Activated B cell treated with CpG ODN at 0.5 μM for 24 hours (primary cell): ENCODE measurements at regions of chr11 and their contacts with region 1.

Region 1: GRCh38 chr11:64304316-64305072 is 830 bp upstream of the ESRRA start:
- DNase-seq: peak; percentile 84
- ATAC-seq: peak; percentile 13
- H3K4me3 Mint-ChIP-seq: peak overlapping the region; percentile 87
- H3K27ac Mint-ChIP-seq: peak overlapping the region; percentile 89
- H3K4me1 Mint-ChIP-seq: peaks cover 34% of the 10 kb centered on the region
- H3K27me3 Mint-ChIP-seq: peaks cover 11% of the 10 kb centered on the region
- CTCF ChIP-seq: peak; percentile 22

Region 2: DNA sequence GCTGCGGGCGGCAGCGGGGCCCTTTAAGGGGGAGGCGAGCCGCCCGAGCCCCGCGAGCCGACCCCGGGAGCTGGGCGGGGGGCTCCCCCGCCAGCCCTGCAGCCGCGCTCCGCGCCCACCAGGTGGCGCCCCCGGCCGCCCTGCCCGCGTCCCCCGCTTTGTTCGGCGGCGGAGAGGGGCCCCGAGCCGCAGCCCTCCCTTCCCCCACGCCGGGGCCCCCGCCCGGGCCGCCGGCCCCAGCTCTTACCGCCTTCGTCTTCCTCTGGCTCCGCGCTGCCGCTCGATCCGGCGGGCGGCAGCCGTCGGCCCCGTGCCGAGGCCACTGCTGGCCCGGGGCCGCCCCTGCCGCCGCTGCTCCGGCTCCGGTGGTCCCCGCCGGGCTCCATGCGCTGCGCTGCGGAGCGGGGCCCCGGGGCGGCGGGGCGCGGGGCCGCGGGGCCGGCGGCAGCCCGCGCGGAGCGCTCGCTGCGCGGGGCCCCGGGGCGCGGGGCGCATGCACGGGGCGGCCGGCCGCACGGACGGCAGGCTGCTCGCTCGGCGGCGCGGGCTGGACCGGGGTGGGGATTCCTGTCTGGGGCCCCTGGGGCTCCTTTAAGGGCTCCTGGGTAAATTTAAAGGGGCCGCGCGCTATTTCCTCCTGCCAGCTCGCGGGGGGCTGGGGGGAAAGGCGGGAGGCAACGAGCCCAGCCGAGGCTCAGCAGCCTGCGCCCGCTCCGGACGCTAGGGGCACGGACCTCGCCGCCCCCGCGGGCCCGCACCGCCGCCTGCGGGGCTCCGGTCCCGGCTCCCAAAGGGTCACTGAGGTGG is 536.1 kb before region 1 on chr11 and contains the start of gene ZFTA:
- CTCF ChIA-PET with region 1: no interaction called
- POLR2A ChIA-PET with region 1: no interaction called
- intact Hi-C with region 1: loop called (anchors 5 kb)
- DNase-seq: peak; percentile 80
- ATAC-seq: peak; percentile 68
- H3K4me3 Mint-ChIP-seq: peak within 1 kb of the TSS; percentile 94
- H3K27ac Mint-ChIP-seq: peak within 1 kb of the TSS; percentile 83
- H3K4me1 Mint-ChIP-seq: peaks cover 11% of the 10 kb centered on the region
- H3K27me3 Mint-ChIP-seq: peaks cover 4% of the 10 kb centered on the region
- CTCF ChIP-seq: no peak
- total RNA-seq, gene ZFTA: 11.2 and 12.5 TPM in 2 replicates

Region 3: DNA sequence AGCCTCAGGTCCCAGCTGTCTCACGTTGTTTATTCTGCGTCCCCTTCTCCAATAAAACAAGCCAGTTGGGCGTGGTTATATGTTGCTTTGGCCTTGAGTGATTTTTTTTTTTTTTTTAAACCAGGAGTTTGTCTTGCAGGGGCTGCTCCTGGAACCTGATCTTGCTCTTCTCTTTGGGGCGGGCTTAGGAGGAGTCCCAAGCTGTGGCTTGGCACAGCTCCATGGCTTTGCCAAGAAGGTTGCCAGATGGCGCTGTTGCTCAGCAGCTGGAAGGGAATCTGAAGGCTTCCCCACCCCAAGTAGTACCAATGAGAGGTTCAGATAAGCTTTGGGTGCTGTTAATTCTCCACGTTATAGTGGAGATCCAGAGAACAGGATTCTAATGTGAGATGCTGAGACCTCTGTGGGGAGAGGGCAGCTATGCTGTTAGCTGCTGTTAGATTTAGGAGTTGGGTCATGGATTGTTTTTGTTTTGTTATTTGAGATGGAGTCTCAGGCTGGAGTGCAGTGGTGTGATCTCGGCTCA is 100.0 kb before region 1 on chr11:
- CTCF ChIA-PET with region 1: interaction called, 147 read pairs
- POLR2A ChIA-PET with region 1: interaction called, 62 read pairs
- intact Hi-C with region 1: loop called (anchors 1 kb)
- DNase-seq: peak; percentile 49
- ATAC-seq: peak; percentile 22
- H3K4me3 Mint-ChIP-seq: peak overlapping the region; percentile 73
- H3K27ac Mint-ChIP-seq: peak overlapping the region; percentile 83
- H3K4me1 Mint-ChIP-seq: peaks cover 44% of the 10 kb centered on the region
- H3K27me3 Mint-ChIP-seq: no peaks in the 10 kb centered on the region
- CTCF ChIP-seq: no peak

Region 4: DNA sequence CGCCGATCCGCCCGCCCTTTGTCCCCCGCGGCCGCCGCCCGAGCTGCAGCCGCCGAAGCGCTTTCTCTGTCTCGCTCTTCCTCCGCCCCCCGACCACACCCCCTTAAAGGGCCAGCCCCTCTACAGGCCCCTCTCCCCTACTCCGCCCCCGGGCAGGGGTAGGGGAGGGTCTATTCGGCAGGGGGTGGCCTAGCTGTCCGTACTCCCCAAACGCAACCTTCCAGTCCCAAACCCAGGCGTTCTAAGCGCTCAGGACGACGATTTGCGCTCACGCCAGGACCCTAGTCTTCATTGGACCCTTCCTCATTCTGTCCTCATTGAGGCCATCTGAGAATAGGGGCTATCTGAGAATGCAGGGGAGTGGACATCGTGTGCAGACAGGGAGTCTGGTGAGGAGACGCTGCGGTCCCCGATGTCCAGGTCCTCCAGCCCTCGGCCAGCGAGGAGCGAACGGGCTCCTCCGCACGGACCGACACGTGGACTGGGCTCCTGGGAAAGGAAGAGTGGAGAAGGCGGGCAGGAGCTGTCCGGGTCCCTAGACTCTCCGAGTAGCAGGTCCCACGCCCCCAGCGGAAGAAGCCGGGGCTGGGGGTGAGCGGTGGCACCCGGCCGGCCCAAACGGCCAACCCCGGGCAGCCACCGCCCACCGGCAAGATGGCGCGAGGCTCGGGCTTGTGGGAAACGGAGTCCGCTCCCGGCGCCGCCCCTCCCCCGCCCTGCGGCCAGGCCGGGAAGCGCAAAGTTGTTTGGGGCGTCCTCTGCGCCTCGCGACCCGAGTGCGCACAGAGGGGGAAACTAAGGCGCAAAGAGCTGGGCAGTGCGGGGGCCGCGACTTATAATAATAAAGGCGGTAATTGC is 57.4 kb before region 1 on chr11 and contains the start of gene PPP1R14B:
- CTCF ChIA-PET with region 1: interaction called, 10 read pairs
- POLR2A ChIA-PET with region 1: interaction called, 24 read pairs
- intact Hi-C with region 1: loop called (anchors 1 kb)
- DNase-seq: peak; percentile 78
- ATAC-seq: peak; percentile 63
- H3K4me3 Mint-ChIP-seq: peak within 1 kb of the TSS; percentile 90
- H3K27ac Mint-ChIP-seq: peak within 1 kb of the TSS; percentile 87
- H3K4me1 Mint-ChIP-seq: peaks cover 43% of the 10 kb centered on the region
- H3K27me3 Mint-ChIP-seq: no peaks in the 10 kb centered on the region
- CTCF ChIP-seq: no peak
- total RNA-seq, gene PPP1R14B: 112 and 127 TPM in 2 replicates

Region 5: GRCh38 chr11:64331557-64332371 is 27.3 kb after region 1 on chr11:
- CTCF ChIA-PET with region 1: interaction called, 14 read pairs
- POLR2A ChIA-PET with region 1: interaction called, 7 read pairs
- intact Hi-C with region 1: loop called (anchors 1 kb)
- DNase-seq: peak; percentile 52
- ATAC-seq: peak; percentile 32
- H3K4me3 Mint-ChIP-seq: peak overlapping the region; percentile 2
- H3K27ac Mint-ChIP-seq: peak overlapping the region; percentile 5
- H3K4me1 Mint-ChIP-seq: peaks cover 35% of the 10 kb centered on the region
- H3K27me3 Mint-ChIP-seq: no peaks in the 10 kb centered on the region
- CTCF ChIP-seq: no peak

Region 6: DNA sequence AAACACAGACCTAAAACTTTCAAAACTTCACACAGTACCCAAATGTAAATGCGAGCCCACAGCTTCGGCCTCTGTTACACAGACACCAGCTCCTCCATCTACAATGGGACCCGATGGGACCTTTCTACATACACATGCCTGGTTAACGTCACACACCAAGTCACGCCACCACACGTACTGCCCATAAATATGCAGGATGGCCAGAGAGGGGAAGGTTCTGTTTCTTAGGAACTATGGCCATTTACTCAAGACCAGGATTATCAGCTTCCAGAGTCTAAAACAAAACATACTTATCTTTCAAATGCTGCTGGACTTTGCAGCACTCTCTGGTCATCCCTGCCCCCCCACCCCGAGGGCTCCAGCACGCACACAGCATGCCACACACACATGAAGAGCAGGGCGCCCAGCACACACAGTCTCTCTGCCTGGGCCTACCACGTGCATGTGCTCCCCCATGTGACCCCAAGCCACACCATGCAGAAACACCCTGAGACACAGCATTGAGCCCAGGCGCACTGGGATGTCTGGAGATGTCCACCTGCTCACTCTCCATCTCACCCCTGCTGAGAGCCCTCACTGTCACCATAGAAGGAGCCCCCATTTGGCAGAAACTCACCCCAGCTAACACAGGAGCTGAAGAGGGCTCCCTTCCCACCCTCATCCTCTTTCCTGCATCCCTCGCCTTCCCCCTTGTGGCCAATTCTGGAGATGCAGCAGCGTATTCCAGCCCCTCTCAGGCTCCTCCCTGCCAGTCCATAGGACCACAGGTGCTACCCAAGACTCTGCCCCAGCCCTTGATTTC is 348.3 kb after region 1 on chr11:
- CTCF ChIA-PET with region 1: no interaction called
- POLR2A ChIA-PET with region 1: no interaction called
- intact Hi-C with region 1: loop called (anchors 1 kb)
- DNase-seq: peak; percentile 59
- ATAC-seq: peak; percentile 60
- H3K4me3 Mint-ChIP-seq: no peak overlapping the region
- H3K27ac Mint-ChIP-seq: no peak overlapping the region
- H3K4me1 Mint-ChIP-seq: peaks cover 27% of the 10 kb centered on the region
- H3K27me3 Mint-ChIP-seq: peaks cover 5% of the 10 kb centered on the region
- CTCF ChIP-seq: no peak